ENCODE measurements at regions of chr5 and their contacts with region 1.

Region 1: DNA sequence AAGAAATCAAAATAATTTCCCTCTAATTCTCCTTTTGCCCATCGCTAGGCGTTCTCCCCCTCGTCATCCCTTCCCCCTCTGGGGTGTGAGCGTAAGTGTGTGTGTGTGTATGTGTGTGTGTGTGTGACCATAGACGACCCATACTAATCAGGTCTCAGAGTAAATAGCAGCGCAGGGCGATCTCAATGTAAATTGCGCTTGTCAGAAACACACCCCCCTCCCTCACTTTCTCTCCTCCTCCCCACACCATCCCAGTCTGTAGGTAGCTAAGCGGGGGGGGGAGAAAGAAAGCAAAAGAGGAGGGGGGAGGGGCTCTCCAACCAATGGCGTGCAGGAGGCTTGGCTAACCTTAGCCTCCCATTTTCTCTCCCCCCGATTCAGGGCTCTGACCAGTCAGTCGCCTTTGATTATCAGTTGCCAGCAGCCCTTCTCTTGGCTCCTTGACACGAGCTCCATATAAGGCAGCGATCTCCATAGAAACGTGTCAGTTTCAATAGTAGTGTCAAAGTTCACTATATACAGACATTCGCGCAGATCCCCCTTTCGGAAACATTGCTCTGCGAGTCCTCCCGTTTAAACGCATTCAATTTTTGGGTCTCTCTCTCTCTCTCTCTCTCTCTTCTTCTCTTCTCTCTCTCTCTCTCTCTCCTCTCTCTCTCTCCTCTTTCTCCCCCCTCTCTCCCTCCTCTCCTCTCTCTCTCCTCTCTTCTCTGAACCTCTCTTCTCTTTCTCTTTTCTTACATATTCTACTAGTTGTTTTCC is at the start of gene NR2F1:
- DNase-seq: no peak
- ATAC-seq: no peak
- H3K4me3 Mint-ChIP-seq: no peak within 1 kb of the TSS
- H3K27ac Mint-ChIP-seq: no peak within 1 kb of the TSS
- H3K4me1 Mint-ChIP-seq: peaks cover 34% of the 10 kb centered on the region
- H3K27me3 Mint-ChIP-seq: peaks cover 34% of the 10 kb centered on the region
- CTCF ChIP-seq: no peak
- total RNA-seq, gene NR2F1: not detected in 2 replicates

Region 2: DNA sequence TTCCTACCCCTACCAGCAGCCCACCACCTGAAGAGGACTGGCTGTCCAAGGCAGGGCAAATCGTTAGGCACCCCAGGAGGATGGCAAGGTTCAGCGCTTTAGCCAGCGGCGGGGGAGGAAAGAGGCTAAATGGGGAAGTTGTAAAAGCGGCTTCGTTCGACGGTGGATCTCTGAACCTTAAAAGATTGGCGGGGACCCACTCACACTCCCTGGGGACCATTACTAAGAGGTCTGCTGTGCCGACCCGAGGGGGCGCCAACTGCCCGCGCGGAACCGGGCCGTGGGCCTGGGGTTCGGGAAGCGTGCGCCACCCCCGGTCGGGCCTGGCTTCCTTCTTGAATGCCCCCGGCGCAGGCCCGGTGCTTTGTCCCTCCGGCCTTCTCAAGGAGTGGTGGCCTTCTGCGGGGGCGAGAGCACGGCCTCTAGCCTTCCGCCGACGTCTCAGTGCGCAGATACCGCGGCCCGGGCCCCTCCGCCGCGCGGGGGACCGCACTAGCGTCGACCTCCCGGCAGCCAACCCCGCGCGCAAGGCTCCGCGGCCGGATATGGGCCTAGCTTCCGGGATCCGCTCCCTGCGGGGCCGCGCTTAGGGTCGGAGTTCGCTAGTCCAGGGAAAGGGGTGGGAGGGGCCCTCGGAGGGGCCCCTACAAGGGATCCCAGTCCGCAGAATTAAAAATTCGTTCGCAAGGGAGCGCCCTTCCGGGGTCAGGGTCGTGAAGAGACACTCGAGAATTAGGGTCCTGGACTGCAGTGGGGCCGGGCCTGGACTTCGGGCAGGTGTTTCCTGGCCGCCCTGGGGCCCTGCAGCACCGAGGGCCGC is 12.4 kb before region 1 on chr5:
- CTCF ChIA-PET with region 1: no interaction called
- POLR2A ChIA-PET with region 1: no interaction called
- intact Hi-C with region 1: loop called (anchors 1 kb)
- DNase-seq: no peak
- ATAC-seq: peak; percentile 45
- H3K4me3 Mint-ChIP-seq: peak overlapping the region; percentile 42
- H3K27ac Mint-ChIP-seq: no peak overlapping the region
- H3K4me1 Mint-ChIP-seq: peaks cover 17% of the 10 kb centered on the region
- H3K27me3 Mint-ChIP-seq: peaks cover 67% of the 10 kb centered on the region
- CTCF ChIP-seq: no peak

Region 3: GRCh38 chr5:93607367-93608258 is 24.8 kb after region 1 on chr5:
- CTCF ChIA-PET with region 1: interaction called, 3 read pairs
- POLR2A ChIA-PET with region 1: interaction called, 3 read pairs
- intact Hi-C with region 1: loop called (anchors 1 kb)
- DNase-seq: no peak
- ATAC-seq: peak; percentile 64
- H3K4me3 Mint-ChIP-seq: peak overlapping the region; percentile 19
- H3K27ac Mint-ChIP-seq: no peak overlapping the region
- H3K4me1 Mint-ChIP-seq: peaks cover 15% of the 10 kb centered on the region
- H3K27me3 Mint-ChIP-seq: peaks cover 76% of the 10 kb centered on the region
- CTCF ChIP-seq: no peak

Region 4: GRCh38 chr5:93620487-93621326 is 37.8 kb after region 1 on chr5:
- CTCF ChIA-PET with region 1: no interaction called
- POLR2A ChIA-PET with region 1: interaction called, 6 read pairs
- intact Hi-C with region 1: loop called (anchors 5 kb)
- DNase-seq: no peak
- ATAC-seq: peak; percentile 89
- H3K4me3 Mint-ChIP-seq: peak overlapping the region; percentile 92
- H3K27ac Mint-ChIP-seq: peak overlapping the region; percentile 64
- H3K4me1 Mint-ChIP-seq: peaks cover 16% of the 10 kb centered on the region
- H3K27me3 Mint-ChIP-seq: peaks cover 2% of the 10 kb centered on the region
- CTCF ChIP-seq: no peak

Region 5: DNA sequence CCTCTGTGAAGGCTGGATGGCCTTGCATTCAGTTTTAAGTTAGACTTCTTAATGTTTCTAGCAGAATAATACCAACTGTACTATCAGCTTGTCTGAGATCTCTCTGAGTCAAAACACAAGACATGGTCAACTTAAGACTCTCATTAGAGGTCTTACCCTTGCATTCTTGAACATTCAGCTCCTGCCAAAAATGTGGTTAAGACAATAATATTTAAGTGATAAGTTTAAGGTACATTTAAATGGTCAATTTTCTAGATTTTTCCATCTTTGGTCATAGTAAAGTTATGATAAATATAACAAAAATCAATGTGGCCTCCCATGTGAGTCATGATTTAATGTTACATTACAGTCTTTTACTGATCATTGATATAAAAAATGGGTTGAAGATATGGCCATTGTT is 75.2 kb after region 1 on chr5:
- CTCF ChIA-PET with region 1: no interaction called
- POLR2A ChIA-PET with region 1: no interaction called
- intact Hi-C with region 1: no loop called
- DNase-seq: no peak
- ATAC-seq: no peak
- H3K4me3 Mint-ChIP-seq: no peak overlapping the region
- H3K27ac Mint-ChIP-seq: no peak overlapping the region
- H3K4me1 Mint-ChIP-seq: no peaks in the 10 kb centered on the region
- H3K27me3 Mint-ChIP-seq: no peaks in the 10 kb centered on the region
- CTCF ChIP-seq: no peak

Region 6: DNA sequence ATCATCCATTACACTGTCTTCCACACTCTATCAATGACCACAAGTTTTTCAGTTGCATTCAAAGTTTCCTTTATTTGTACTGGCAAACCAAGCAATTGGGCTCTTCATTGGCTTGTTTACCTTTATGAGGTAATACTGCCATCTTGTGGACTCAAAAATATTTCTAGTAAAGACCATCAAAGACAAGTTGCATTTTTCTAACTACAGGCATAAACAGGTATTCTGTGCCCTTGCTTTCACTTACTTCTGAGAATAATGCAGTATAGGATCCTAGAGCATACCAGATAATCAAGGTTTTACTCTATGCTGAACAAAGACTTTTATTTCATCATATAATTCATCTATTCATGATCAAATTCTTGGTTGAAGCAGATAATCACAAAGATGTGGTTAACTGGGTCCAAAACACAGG is 332.3 kb after region 1 on chr5:
- CTCF ChIA-PET with region 1: interaction called, 3 read pairs
- POLR2A ChIA-PET with region 1: no interaction called
- intact Hi-C with region 1: loop called (anchors 1 kb)
- DNase-seq: no peak
- ATAC-seq: no peak
- H3K4me3 Mint-ChIP-seq: no peak overlapping the region
- H3K27ac Mint-ChIP-seq: no peak overlapping the region
- H3K4me1 Mint-ChIP-seq: no peaks in the 10 kb centered on the region
- H3K27me3 Mint-ChIP-seq: no peaks in the 10 kb centered on the region
- CTCF ChIP-seq: no peak

Region 7: DNA sequence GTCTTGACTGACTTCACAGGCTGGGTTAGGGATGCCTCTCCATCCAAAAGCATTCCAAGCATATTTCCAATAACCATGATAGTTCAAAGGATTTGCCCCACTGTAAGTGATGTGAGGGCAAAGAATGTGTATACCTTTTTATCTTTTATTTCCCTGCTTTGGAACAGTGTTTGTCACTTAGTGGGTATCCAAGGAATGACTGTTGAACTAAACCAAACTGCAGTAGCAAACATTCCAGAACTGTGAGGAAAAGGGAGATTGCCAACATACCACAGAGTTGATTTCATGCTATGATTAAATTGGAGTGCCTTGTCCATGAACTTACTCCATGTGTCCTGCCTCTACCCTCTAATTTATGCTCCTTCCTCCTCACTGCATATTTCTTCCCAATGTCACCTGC is 635.5 kb after region 1 on chr5:
- CTCF ChIA-PET with region 1: no interaction called
- POLR2A ChIA-PET with region 1: no interaction called
- intact Hi-C with region 1: no loop called
- DNase-seq: no peak
- ATAC-seq: no peak
- H3K4me3 Mint-ChIP-seq: no peak overlapping the region
- H3K27ac Mint-ChIP-seq: no peak overlapping the region
- H3K4me1 Mint-ChIP-seq: no peaks in the 10 kb centered on the region
- H3K27me3 Mint-ChIP-seq: no peaks in the 10 kb centered on the region
- CTCF ChIP-seq: no peak

Region 8: DNA sequence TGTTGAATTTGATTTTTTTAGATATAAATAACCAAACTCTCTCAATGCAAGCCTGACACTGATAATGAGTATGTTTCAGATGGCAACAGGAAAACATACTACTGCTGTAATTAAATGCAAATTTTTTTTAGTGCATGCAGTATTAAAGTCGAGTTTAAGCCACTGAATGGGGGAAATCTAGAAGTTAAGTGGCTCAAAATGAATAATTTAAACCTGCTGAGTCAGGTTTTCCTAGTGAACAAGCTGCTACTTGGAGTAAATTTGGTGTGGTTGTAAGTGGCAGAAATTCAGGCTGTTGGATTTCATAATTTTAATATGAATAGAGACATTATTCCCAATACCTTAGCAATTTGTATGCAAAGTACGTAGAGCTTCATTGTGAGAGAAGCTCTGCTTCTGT is 1157.4 kb after region 1 on chr5:
- CTCF ChIA-PET with region 1: no interaction called
- POLR2A ChIA-PET with region 1: no interaction called
- intact Hi-C with region 1: loop called (anchors 2 kb)
- DNase-seq: no peak
- ATAC-seq: no peak
- H3K4me3 Mint-ChIP-seq: no peak overlapping the region
- H3K27ac Mint-ChIP-seq: no peak overlapping the region
- H3K4me1 Mint-ChIP-seq: peaks cover 7% of the 10 kb centered on the region
- H3K27me3 Mint-ChIP-seq: no peaks in the 10 kb centered on the region
- CTCF ChIP-seq: no peak

Region 9: GRCh38 chr5:94776167-94776566 is 1193.3 kb after region 1 on chr5:
- CTCF ChIA-PET with region 1: no interaction called
- POLR2A ChIA-PET with region 1: no interaction called
- intact Hi-C with region 1: no loop called
- DNase-seq: no peak
- ATAC-seq: no peak
- H3K4me3 Mint-ChIP-seq: no peak overlapping the region
- H3K27ac Mint-ChIP-seq: no peak overlapping the region
- H3K4me1 Mint-ChIP-seq: no peaks in the 10 kb centered on the region
- H3K27me3 Mint-ChIP-seq: peaks cover 9% of the 10 kb centered on the region
- CTCF ChIP-seq: no peak